ENCODE measurements at regions of chr5 and their contacts with region 1.

Region 1: GRCh38 chr5:178940569-178941360 is at the start of gene ZNF454:
- DNase-seq: peak; percentile 96
- H3K4me3 ChIP-seq: peak within 1 kb of the TSS; percentile 66 to 83 (median 76)
- H3K27ac ChIP-seq: peak within 1 kb of the TSS; percentile 77 to 88 (median 86)
- H3K4me1 ChIP-seq: peaks cover 9 to 24% (median 11%) of the 10 kb centered on the region in 4 donors
- H3K27me3 ChIP-seq: no peaks in the 10 kb centered on the region
- CTCF ChIP-seq: peak in 1 of 3 experiments; percentile 19
- EP300 ChIP-seq: no peak
- POLR2A ChIP-seq: no peak
- total RNA-seq, gene ZNF454: 2.3 to 4.8 (median 4.2) TPM

Region 2: GRCh38 chr5:178859625-178860531 is 80.9 kb before region 1 on chr5 and contains the start of gene ZNF354B:
- intact Hi-C with region 1: loop called (anchors 5 kb)
- DNase-seq: peak; percentile 95
- H3K4me3 ChIP-seq: peak within 1 kb of the TSS; percentile 69 to 96 (median 93)
- H3K27ac ChIP-seq: peak within 1 kb of the TSS; percentile 85 to 92 (median 88)
- H3K4me1 ChIP-seq: peaks cover 7 to 31% (median 24%) of the 10 kb centered on the region in 4 donors
- H3K27me3 ChIP-seq: no peaks in the 10 kb centered on the region
- CTCF ChIP-seq: peak; percentile 14 to 26 (median 16)
- EP300 ChIP-seq: no peak
- POLR2A ChIP-seq: peak; percentile 27
- total RNA-seq, gene ZNF354B: 9.8 to 18.8 (median 15.4) TPM

Region 3: GRCh38 chr5:178895651-178896571 is 44.9 kb before region 1 on chr5 and contains the start of gene ZFP2:
- intact Hi-C with region 1: loop called (anchors 5 kb)
- DNase-seq: no peak
- H3K4me3 ChIP-seq: peak within 1 kb of the TSS; percentile 70 to 92 (median 82)
- H3K27ac ChIP-seq: peak within 1 kb of the TSS; percentile 80 to 84 (median 82)
- H3K4me1 ChIP-seq: peaks cover 9 to 13% (median 10%) of the 10 kb centered on the region in 4 donors
- H3K27me3 ChIP-seq: no peaks in the 10 kb centered on the region
- CTCF ChIP-seq: no peak
- EP300 ChIP-seq: no peak
- POLR2A ChIP-seq: peak; percentile 11
- total RNA-seq, gene ZFP2: 2.1 to 4.0 (median 2.8) TPM

Region 4: GRCh38 chr5:179023528-179024430 is 83.0 kb after region 1 on chr5 and contains the start of gene ZNF879:
- intact Hi-C with region 1: loop called (anchors 5 kb)
- DNase-seq: peak; percentile 98
- H3K4me3 ChIP-seq: peak within 1 kb of the TSS; percentile 76 to 95 (median 78)
- H3K27ac ChIP-seq: peak within 1 kb of the TSS; percentile 85 to 93 (median 90)
- H3K4me1 ChIP-seq: peaks cover 11 to 19% (median 15%) of the 10 kb centered on the region in 4 donors
- H3K27me3 ChIP-seq: no peaks in the 10 kb centered on the region
- CTCF ChIP-seq: peak in 1 of 3 experiments; percentile 11
- EP300 ChIP-seq: no peak
- POLR2A ChIP-seq: no peak
- total RNA-seq, gene ZNF879: 4.3 to 6.4 (median 4.8) TPM

Region 5: DNA sequence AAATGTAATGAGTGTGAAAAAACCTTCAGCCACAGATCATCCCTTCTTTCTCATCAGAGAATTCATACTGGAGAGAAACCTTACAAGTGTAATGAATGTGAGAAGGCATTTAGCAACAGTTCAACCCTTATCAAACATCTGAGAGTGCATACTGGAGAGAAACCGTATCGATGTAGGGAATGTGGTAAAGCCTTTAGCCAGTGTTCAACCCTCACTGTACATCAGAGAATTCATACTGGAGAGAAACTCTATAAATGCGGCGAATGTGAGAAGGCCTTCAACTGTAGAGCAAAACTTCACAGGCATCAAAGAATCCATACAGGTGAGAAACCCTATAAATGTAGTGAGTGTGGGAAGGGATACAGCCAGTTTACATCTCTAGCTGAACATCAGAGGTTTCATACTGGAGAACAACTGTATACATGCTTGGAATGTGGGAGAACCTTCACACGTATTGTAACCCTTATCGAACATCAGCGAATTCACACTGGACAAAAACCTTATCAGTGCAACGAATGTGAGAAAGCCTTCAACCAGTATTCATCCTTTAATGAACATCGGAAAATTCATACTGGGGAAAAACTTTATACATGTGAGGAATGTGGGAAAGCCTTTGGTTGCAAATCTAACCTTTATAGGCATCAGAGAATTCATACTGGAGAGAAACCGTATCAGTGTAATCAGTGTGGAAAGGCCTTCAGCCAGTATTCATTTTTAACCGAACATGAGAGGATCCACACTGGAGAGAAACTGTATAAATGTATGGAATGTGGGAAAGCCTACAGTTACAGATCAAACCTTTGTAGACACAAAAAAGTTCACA is 138.6 kb after region 1 on chr5:
- intact Hi-C with region 1: no loop called
- DNase-seq: no peak
- H3K4me3 ChIP-seq: no peak overlapping the region
- H3K27ac ChIP-seq: no peak overlapping the region
- H3K4me1 ChIP-seq: no peaks in the 10 kb centered on the region
- H3K27me3 ChIP-seq: no peaks in the 10 kb centered on the region
- CTCF ChIP-seq: no peak
- EP300 ChIP-seq: no peak
- POLR2A ChIP-seq: no peak

Measured in esophagus muscularis mucosa (tissue), 4 donors.